CD8-positive, alpha-beta memory T cell (primary cell): ENCODE measurements at regions of chr21 and their contacts with region 1.

Region 1: GRCh38 chr21:17585875-17586450 is 26.7 kb downstream of the BTG3 start:
- DNase-seq: peak in 2 of 5 donors; percentile 8 to 33
- H3K4me3 ChIP-seq: no peak overlapping the region
- H3K4me3 Mint-ChIP-seq: no peak overlapping the region
- H3K27ac ChIP-seq: no peak overlapping the region
- H3K27ac Mint-ChIP-seq: no peak overlapping the region
- H3K4me1 ChIP-seq: no peaks in the 10 kb centered on the region
- H3K4me1 Mint-ChIP-seq: no peaks in the 10 kb centered on the region
- H3K27me3 ChIP-seq: no peaks in the 10 kb centered on the region
- H3K27me3 Mint-ChIP-seq: peaks cover 0 to 2% of the 10 kb centered on the region in 2 donors

Region 2: GRCh38 chr21:17387030-17387617 is 198.8 kb before region 1 on chr21:
- CTCF ChIA-PET with region 1: interaction called, 36 read pairs
- POLR2A ChIA-PET with region 1: no interaction called
- DNase-seq: peak; percentile 1 to 55 (median 36)
- H3K4me3 ChIP-seq: no peak overlapping the region
- H3K4me3 Mint-ChIP-seq: no peak overlapping the region
- H3K27ac ChIP-seq: no peak overlapping the region
- H3K27ac Mint-ChIP-seq: no peak overlapping the region
- H3K4me1 ChIP-seq: no peaks in the 10 kb centered on the region
- H3K4me1 Mint-ChIP-seq: no peaks in the 10 kb centered on the region
- H3K27me3 ChIP-seq: no peaks in the 10 kb centered on the region
- H3K27me3 Mint-ChIP-seq: no peaks in the 10 kb centered on the region